ENCODE measurements at regions of chr22 and their contacts with region 1.

Region 1: GRCh38 chr22:17903564-17904295 is 120.6 kb downstream of the MICAL3 start:
- DNase-seq: peak in 2 of 6 donors; percentile 41 to 49
- ATAC-seq: peak; percentile 44 to 82 (median 73)
- H3K4me3 ChIP-seq: no peak overlapping the region
- H3K27ac ChIP-seq: peak overlapping the region in 2 of 4 donors; percentile 37 to 45
- H3K4me1 ChIP-seq: peaks cover 8 to 9% (median 8%) of the 10 kb centered on the region in 3 donors
- H3K27me3 ChIP-seq: no peaks in the 10 kb centered on the region
- CTCF ChIP-seq: no peak

Region 2: DNA sequence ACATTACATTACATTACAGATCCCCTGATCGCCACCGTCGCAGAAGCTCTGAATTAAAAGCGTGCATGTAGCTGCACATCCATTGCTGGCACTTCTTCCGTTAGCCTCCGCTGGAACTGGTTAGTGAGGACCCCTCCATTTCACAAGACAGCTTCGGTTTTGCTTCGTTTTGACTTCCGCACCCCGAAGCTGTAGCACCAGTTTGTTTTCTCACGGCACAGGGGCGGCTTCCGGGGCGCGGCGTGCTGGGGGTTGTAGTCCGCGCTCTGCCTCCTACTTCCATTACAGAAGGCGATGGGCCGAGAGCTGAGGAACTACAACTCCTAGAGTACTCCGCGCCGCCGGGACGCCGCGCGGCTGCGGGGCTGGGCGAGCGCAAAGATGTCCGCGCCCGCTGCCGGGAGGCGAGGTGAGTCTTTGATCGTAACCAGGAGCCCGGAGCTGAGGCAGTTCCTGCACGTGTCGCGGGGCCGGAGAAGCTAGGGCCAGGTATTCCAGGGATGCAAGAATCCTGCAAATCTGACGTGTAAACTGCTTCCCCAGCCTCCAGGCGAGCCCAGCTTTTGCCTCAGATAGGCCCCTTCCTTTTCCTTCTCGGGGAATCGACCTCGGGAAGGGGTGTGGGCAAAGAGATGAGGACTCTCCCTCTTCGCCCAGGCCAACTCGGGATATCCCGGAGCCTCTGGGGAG is 174.1 kb after region 1 on chr22 and contains the start of gene PEX26:
- intact Hi-C with region 1: loop called in 1 of 3 experiments (anchors 10 kb)
- DNase-seq: peak; percentile 91 to 96 (median 94)
- ATAC-seq: peak; percentile 96 to 97 (median 97)
- H3K4me3 ChIP-seq: peak within 1 kb of the TSS; percentile 77 to 99 (median 92)
- H3K27ac ChIP-seq: peak within 1 kb of the TSS; percentile 59 to 88 (median 67)
- H3K4me1 ChIP-seq: peaks cover 7 to 20% (median 16%) of the 10 kb centered on the region in 3 donors
- H3K27me3 ChIP-seq: no peaks in the 10 kb centered on the region
- CTCF ChIP-seq: no peak
- total RNA-seq, gene PEX26: 11.0 to 26.5 (median 14.8) TPM

Measured in pancreas (tissue), 10 donors.